MCF 10A (cell line): ENCODE measurements at regions of chr15 and their contacts with region 1.

Region 1: DNA sequence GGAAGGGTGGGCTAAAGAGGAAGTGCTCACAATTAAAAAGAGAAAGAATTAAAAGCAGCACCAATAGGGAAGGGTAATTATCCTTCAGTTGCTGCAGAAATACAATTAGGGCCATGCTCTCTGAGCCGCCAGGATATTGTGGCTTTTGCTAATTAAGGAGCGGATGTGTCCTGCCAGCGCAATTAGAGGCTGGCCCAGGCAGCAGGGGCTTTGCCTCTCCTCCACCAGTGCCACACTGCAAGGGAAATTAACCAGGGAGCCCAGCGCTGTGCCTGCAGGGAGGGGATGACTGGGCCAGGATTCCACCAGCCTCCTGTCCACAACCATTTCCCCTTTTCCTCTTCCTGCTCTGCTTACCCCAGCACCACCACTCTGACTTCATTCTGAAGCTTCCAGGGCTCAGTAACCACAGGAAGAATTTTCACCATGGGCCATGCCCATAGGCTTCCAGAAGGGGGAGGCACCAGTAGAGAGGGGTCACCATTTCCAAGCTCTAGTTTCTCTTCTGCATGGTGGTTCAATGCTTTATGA is 10.4 kb upstream of the AEN start:
- DNase-seq: no peak
- H3K4me3 Mint-ChIP-seq: no peak overlapping the region
- H3K27ac Mint-ChIP-seq: no peak overlapping the region
- H3K4me1 Mint-ChIP-seq: no peaks in the 10 kb centered on the region
- H3K27me3 Mint-ChIP-seq: peaks cover 59% of the 10 kb centered on the region
- CTCF ChIP-seq: no peak

Region 2: GRCh38 chr15:88476635-88477060 is 134.1 kb before region 1 on chr15:
- CTCF ChIA-PET with region 1: interaction called, 3 read pairs
- POLR2A ChIA-PET with region 1: no interaction called
- intact Hi-C with region 1: loop called (anchors 1 kb)
- DNase-seq: peak; percentile 49
- H3K4me3 Mint-ChIP-seq: no peak overlapping the region
- H3K27ac Mint-ChIP-seq: no peak overlapping the region
- H3K4me1 Mint-ChIP-seq: no peaks in the 10 kb centered on the region
- H3K27me3 Mint-ChIP-seq: no peaks in the 10 kb centered on the region
- CTCF ChIP-seq: peak; percentile 50